Dendritic cell treated with granulocyte-macrophage colony-stimulating factor and Interleukin-4, amounts not matched to agents 40 ng/mL and 50 ng/mL, for 4 days (primary cell): ENCODE measurements at regions of chr6 and their contacts with region 1.

Region 1: GRCh38 chr6:137641474-137642077 is 147.4 kb upstream of the OLIG3 start:
- H3K4me3 Mint-ChIP-seq: no peak overlapping the region
- H3K27ac Mint-ChIP-seq: no peak overlapping the region
- H3K4me1 Mint-ChIP-seq: peaks cover 3% of the 10 kb centered on the region
- H3K27me3 Mint-ChIP-seq: peaks cover 7% of the 10 kb centered on the region

Region 2: DNA sequence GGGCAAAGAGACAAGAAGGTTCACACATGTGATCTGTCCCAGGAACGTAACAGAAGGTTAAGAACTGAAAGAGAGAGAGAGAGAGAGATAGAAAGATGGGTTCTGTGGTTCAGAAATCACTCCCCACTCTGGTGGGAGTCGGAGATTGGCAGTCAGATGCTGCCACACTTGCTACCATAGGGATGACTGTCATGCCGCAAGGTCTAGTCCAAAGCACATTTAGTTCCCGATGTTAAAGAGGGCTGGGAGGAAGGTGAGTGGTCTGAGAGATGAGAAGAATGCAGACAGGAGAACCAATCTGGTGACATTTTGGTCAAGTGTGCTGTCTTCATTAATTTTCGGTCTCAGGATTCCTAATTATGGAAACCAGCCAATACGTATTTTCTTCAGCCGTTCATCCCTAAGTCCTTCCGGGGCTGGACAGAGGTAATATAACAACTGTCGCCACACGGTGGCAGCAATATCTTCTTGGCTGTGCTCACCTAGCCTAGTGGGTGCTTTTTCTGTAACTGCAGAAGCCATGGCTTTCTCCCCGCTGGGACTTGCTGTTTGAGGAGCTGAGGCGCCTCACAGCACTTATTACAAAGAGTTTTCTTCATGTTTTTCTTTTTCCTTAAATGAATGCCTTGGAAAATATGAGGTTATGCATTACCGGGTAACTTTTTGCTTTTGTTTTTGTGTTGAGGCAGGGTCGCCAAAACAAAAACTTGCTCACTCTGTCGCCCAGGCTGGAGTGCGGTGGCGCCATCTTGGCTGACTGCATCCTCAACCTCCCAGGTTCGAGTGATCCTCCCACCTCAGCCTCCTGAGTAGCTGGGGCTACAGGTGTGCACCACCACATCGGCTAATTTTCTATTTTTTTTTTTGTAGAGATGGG is 673.5 kb before region 1 on chr6:
- intact Hi-C with region 1: loop called (anchors 2 kb)
- H3K4me3 Mint-ChIP-seq: no peak overlapping the region
- H3K27ac Mint-ChIP-seq: no peak overlapping the region
- H3K4me1 Mint-ChIP-seq: peaks cover 6% of the 10 kb centered on the region
- H3K27me3 Mint-ChIP-seq: peaks cover 34% of the 10 kb centered on the region

Region 3: DNA sequence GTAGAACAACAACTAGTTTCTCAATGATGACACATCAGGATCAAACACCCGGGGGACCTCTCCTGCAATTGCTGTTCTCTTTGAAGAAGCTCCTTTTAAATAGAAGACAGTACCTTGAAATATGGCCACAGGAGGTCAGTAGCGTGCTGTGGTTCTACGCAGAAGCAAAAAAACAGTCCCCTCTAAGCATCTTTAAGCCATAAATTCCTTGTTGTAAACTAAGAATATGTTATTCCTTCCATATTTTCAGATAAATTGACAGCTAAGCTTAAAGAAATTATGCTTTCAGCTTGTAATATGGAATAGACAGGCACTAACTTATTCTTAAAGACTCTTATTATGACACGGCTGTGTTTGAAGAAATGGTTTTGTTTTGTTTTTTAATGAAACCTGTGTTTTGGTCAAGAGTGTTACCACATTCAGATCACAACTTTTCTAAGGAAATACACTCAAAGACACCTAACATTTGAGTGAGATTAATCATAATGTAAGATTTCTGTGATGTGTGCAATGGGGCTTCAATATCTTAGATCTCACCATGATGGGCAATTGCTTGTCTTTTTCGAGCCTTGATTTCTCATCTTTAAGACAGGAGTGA is 547.1 kb before region 1 on chr6:
- intact Hi-C with region 1: loop called (anchors 1 kb)
- H3K4me3 Mint-ChIP-seq: no peak overlapping the region
- H3K27ac Mint-ChIP-seq: no peak overlapping the region
- H3K4me1 Mint-ChIP-seq: peaks cover 14% of the 10 kb centered on the region
- H3K27me3 Mint-ChIP-seq: no peaks in the 10 kb centered on the region

Region 4: GRCh38 chr6:137271245-137272183 is 370.1 kb before region 1 on chr6:
- intact Hi-C with region 1: loop called (anchors 5 kb)
- H3K4me3 Mint-ChIP-seq: no peak overlapping the region
- H3K27ac Mint-ChIP-seq: no peak overlapping the region
- H3K4me1 Mint-ChIP-seq: peaks cover 11% of the 10 kb centered on the region
- H3K27me3 Mint-ChIP-seq: no peaks in the 10 kb centered on the region

Region 5: DNA sequence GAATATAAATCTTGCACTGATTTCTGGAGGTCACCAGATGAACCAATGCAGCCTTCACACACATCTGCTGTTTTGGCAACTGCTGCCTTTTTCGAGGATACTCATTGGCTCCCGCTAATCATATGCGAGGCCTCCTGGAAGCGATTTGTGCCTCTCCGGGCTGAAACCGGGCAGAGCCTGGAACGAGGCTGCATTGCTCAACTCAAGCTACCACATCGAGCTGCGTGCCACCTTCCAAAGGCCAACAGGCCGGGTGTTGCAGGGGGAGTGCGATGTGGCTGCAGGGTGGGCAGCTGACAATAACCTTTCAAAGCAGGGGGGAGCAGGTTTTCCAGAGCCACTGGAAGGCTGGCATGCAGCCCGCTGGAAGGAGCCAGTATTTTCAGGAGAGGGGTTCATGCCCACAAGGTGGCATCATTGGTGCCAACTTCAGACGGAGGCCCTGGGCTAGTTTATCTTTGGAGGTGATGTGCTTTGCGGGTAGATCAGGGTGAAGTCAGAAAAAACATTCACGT is 299.8 kb before region 1 on chr6:
- intact Hi-C with region 1: loop called (anchors 5 kb)
- H3K4me3 Mint-ChIP-seq: no peak overlapping the region
- H3K27ac Mint-ChIP-seq: no peak overlapping the region
- H3K4me1 Mint-ChIP-seq: peaks cover 11% of the 10 kb centered on the region
- H3K27me3 Mint-ChIP-seq: peaks cover 12% of the 10 kb centered on the region

Region 6: GRCh38 chr6:137602313-137603270 is 39.0 kb before region 1 on chr6:
- intact Hi-C with region 1: no loop called
- H3K4me3 Mint-ChIP-seq: no peak overlapping the region
- H3K27ac Mint-ChIP-seq: no peak overlapping the region
- H3K4me1 Mint-ChIP-seq: no peaks in the 10 kb centered on the region
- H3K27me3 Mint-ChIP-seq: peaks cover 27% of the 10 kb centered on the region